ENCODE measurements at regions of chr1 and their contacts with region 1.

Region 1: DNA sequence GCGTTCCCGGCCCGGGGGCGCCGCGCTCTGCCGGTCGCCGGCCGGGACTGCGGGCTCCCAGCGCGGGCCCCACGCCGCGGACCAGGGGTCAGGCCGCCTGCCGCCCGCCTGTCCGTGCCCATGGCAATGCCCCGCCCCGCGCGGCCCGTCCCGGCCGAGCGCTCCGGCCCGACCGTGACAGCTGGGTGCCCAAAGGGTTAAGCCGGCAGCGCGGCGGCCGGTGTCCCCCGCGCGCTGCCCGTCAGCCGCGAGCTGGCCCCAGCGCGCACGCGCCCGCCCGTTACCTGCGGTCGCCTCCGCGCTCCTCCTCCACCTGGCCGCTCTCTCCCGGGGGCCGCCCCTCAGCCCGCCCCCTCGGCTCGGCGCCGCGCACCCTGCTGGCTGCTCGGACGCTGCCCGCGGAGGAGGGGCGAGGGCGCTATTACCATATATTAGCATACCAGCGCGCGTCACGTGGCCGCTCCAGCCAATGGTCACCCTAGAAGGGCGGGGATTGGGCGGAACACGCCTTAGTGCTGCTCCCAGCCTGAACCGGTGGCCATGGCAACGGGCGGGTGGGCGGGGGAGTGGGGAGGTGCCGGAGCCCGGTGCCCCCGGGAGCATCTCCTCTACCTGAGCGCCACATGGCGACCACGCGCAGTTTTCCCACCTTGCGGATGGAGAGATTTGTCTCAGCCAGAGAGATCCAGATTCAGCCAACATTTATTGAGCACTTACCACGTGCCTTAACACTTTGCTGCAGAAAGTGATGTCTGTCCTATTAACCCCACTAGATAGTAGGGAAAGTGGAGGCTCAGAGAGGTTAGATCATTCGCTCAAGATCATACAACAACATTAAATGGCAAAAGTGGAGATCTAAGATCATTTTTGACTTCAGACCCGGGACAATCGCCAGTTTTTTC is at the start of gene PHC2:
- DNase-seq: peak; percentile 96
- ATAC-seq: peak; percentile 88
- H3K4me3 ChIP-seq: peak within 1 kb of the TSS; percentile 58 to 75 (median 66)
- H3K27ac ChIP-seq: peak within 1 kb of the TSS; percentile 75 to 87 (median 86)
- H3K4me1 ChIP-seq: peaks cover 35 to 37% of the 10 kb centered on the region in 2 donors
- H3K27me3 ChIP-seq: no peaks in the 10 kb centered on the region
- CTCF ChIP-seq: peak; percentile 5 to 46 (median 31)
- POLR2A ChIP-seq: peak; percentile 78 to 85
- total RNA-seq, gene PHC2: 318 to 516 (median 364) TPM

Region 2: DNA sequence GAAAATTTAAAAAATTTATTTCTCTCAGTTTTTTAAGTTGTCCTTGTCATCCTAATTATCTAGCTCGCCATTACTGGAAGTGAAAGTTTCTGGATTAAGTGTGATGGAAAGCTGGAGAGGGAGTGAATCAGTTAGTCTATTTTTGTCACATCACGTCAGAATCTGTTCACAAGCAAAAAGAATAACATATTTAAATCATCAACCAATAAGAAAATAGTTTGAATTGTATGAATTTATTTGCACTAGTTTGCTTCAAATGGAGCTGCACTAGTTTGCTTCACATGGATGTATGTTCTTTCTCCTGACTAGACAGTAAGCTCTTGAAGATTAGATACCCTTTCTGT is 22.9 kb before region 1 on chr1:
- in situ Hi-C with region 1: no loop called
- intact Hi-C with region 1: loop called (anchors 2 kb)
- DNase-seq: no peak
- ATAC-seq: peak; percentile 83 to 88
- H3K4me3 ChIP-seq: peak overlapping the region; percentile 20 to 37 (median 35)
- H3K27ac ChIP-seq: peak overlapping the region; percentile 70 to 78 (median 76)
- H3K4me1 ChIP-seq: peaks cover 25 to 36% of the 10 kb centered on the region in 2 donors
- H3K27me3 ChIP-seq: no peaks in the 10 kb centered on the region
- CTCF ChIP-seq: no peak
- POLR2A ChIP-seq: no peak

Measured in gastrocnemius medialis (tissue), 4 donors.